Heart left ventricle (tissue), 16 donors: ENCODE measurements at regions of chr11 and their contacts with region 1.

Region 1: DNA sequence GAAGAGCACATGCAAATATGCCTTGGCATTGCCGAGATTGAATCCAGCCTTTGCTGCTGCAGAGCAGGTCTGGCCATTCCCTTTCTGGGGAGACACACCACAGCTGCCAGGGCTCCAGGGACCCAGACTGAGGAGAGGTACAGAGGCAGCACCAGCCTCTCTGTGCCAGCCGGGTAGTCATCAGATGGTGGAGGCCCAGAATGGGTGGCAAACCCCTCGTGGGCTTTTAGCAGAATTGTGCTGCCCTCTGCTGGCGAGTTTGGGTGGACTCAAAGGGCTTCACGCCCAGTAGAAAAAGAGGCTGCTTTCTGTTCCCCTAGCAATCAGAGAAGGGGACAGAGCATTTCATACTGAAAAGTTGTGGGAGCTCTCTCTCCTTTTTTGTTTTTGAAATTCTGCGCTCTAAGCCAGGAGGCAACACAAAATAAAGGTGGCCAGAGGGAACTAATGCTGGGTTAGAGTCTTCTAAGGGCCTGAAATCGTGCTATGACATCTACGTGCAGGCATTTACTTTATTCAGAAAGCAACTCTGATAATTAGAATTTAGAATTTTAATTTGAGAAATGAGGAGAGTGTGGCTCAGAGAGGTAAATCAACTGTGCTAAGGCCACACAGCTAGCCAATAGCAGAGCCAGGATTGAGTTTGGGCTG is 158.8 kb upstream of the NAV2 start:
- DNase-seq: peak; percentile 77 to 86 (median 80)
- ATAC-seq: peak; percentile 67 to 85 (median 78)
- H3K4me3 ChIP-seq: no peak overlapping the region
- H3K27ac ChIP-seq: no peak overlapping the region
- H3K4me1 ChIP-seq: peaks cover 0 to 9% (median 0%) of the 10 kb centered on the region in 12 donors
- H3K27me3 ChIP-seq: peaks cover 0 to 6% (median 0%) of the 10 kb centered on the region in 9 donors
- CTCF ChIP-seq: peak; percentile 80 to 94 (median 87)
- POLR2A ChIP-seq: no peak

Region 2: DNA sequence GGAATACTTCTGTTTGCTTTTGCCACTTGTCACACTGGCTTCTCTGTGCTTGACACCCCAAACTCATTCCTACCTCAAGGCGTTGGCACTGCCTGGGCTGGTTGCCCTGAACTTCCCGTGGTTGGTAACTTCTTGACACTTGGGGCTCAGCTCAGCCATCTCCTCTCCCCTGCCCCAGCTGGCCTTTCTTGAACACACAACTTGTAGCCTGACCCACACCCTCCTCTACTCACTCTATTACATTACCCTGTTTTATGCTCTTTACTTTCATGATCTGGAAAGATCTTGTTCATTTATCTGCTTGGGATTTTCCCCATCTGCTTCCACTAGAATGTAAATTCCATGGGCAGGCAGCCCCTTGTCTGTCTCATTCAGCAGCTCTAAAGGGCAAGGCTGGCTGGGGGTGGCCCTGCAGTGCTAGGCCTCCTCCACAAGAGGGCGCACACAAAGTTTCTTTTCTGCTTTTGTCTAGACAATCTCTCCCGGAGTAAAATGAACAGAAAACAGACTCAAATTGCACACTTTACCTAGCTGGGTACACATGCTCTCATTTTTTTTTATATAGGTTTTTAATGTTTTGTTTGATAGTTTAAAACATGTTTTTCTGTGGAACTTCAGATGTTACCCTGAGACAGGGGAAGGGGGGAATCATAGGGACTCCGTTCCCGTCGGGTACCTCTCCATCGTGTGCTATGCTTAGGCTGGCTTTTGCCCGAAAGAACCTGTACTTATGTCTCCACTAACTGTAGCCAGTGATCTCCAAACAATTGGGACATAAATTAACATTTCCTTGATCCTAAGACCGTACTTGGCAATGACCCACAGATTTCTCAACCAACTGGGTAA is 476.8 kb before region 1 on chr11:
- intact Hi-C with region 1: loop called in 5 of 10 experiments (anchors 2 to 5 kb)
- DNase-seq: peak in 2 of 5 donors; percentile 34 to 38
- ATAC-seq: peak; percentile 54 to 73 (median 66)
- H3K4me3 ChIP-seq: peak overlapping the region in 1 of 12 donors; percentile 10
- H3K27ac ChIP-seq: no peak overlapping the region
- H3K4me1 ChIP-seq: peaks cover 0 to 3% (median 0%) of the 10 kb centered on the region in 12 donors
- H3K27me3 ChIP-seq: no peaks in the 10 kb centered on the region
- CTCF ChIP-seq: peak; percentile 88 to 99 (median 94)
- POLR2A ChIP-seq: no peak

Region 3: DNA sequence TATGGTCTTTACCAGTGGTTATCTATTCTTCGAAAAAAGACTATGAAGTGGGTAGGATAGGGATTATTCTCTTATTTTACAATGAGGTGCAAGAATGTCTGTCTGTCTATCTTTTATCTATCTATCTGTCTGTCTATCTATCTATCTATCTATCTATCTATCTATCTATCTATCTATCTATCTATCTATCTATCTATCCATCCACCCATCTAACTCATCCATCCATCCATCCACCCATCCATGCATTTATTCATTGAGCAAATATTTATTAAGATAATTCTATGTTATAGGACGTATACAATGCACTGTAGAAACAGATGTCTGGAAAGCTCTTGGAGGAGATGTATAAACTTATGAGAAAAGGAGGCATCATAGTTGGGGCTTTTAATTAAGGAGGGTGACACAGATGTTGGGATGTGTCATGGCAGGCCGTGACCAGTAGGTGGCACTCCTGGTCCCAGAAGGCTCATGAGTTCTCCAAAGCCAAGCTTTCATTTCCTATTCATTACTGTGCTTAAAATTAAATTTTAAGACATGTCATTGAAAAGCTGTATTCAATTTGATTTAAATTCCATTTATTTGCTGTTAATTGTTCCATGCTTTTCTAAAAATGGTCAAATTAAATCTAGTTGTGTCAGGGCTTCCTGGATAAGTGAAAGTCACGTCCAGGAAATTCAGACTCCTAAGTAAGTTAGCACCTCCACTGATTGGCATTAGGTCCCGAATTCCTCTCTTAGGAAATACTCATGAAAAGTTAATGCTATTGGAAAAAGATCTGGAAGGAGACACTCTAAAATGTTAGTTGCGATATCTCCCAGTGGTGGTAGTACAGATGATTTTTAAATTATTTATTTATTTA is 294.1 kb before region 1 on chr11:
- intact Hi-C with region 1: loop called in 8 of 10 experiments (anchors 2 to 5 kb)
- DNase-seq: peak; percentile 27 to 76 (median 57)
- ATAC-seq: peak in 3 of 4 donors; percentile 54 to 72 (median 71)
- H3K4me3 ChIP-seq: peak overlapping the region in 5 of 12 donors; percentile 18 to 49 (median 31)
- H3K27ac ChIP-seq: no peak overlapping the region
- H3K4me1 ChIP-seq: peaks cover 0 to 4% (median 0%) of the 10 kb centered on the region in 12 donors
- H3K27me3 ChIP-seq: no peaks in the 10 kb centered on the region
- CTCF ChIP-seq: peak; percentile 86 to 98 (median 94)
- POLR2A ChIP-seq: no peak

Region 4: DNA sequence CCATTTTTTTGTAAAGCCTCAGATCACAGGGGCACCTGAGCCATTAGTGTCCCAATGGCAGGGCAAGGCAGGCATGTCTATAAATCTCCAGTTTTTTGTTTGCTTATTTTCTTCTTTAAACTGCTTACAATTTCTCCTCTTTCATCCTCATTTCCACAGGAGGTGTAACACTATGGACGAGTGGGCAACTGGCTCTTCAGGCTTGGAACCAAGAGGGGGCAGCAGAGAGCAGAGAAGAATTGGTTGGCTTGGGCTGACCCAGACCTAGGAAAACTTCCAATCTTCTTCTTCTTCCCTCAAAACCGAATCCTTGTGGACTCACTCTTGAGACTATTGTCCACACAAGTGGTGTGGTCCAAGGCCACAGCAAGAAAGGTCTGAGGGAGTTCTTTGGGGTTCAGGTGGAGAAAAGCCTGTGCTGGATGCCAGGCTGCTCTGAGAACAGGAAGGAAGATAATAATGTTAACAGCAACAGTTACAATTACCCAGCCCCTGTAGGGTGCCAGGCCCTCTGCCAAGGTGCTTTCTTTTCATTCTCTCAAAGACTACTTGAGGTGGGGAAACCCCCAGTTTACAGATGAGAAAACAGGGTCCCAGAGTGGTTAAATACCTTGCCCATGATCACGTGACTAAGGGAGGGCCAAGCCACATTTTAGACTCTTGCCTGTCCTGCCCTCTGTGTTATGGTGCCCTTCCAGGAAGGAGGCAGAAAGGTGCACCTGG is 242.3 kb before region 1 on chr11:
- intact Hi-C with region 1: loop called (anchors 1 to 5 kb)
- DNase-seq: peak; percentile 47 to 66 (median 60)
- ATAC-seq: peak; percentile 56 to 88 (median 80)
- H3K4me3 ChIP-seq: no peak overlapping the region
- H3K27ac ChIP-seq: no peak overlapping the region
- H3K4me1 ChIP-seq: peaks cover 0 to 10% (median 0%) of the 10 kb centered on the region in 12 donors
- H3K27me3 ChIP-seq: no peaks in the 10 kb centered on the region
- CTCF ChIP-seq: peak; percentile 70 to 86 (median 81)
- POLR2A ChIP-seq: no peak

Region 5: GRCh38 chr11:19808076-19808911 is 254.5 kb after region 1 on chr11:
- intact Hi-C with region 1: loop called in 1 of 10 experiments (anchors 5 kb)
- DNase-seq: no peak
- ATAC-seq: no peak
- H3K4me3 ChIP-seq: no peak overlapping the region
- H3K27ac ChIP-seq: no peak overlapping the region
- H3K4me1 ChIP-seq: peaks cover 0 to 65% (median 24%) of the 10 kb centered on the region in 12 donors
- H3K27me3 ChIP-seq: no peaks in the 10 kb centered on the region
- CTCF ChIP-seq: peak in 8 of 12 donors; percentile 8 to 55 (median 38)
- POLR2A ChIP-seq: no peak

Region 6: GRCh38 chr11:20127671-20128527 is 574.1 kb after region 1 on chr11:
- intact Hi-C with region 1: loop called in 1 of 10 experiments (anchors 10 kb)
- DNase-seq: peak; percentile 71 to 82 (median 76)
- ATAC-seq: peak; percentile 63 to 86 (median 80)
- H3K4me3 ChIP-seq: no peak overlapping the region
- H3K27ac ChIP-seq: no peak overlapping the region
- H3K4me1 ChIP-seq: peaks cover 0 to 11% (median 4%) of the 10 kb centered on the region in 12 donors
- H3K27me3 ChIP-seq: peaks cover 0 to 13% (median 0%) of the 10 kb centered on the region in 9 donors
- CTCF ChIP-seq: peak; percentile 78 to 87 (median 83)
- POLR2A ChIP-seq: no peak